ENCODE measurements at regions of chr14 and their contacts with region 1.

Region 1: DNA sequence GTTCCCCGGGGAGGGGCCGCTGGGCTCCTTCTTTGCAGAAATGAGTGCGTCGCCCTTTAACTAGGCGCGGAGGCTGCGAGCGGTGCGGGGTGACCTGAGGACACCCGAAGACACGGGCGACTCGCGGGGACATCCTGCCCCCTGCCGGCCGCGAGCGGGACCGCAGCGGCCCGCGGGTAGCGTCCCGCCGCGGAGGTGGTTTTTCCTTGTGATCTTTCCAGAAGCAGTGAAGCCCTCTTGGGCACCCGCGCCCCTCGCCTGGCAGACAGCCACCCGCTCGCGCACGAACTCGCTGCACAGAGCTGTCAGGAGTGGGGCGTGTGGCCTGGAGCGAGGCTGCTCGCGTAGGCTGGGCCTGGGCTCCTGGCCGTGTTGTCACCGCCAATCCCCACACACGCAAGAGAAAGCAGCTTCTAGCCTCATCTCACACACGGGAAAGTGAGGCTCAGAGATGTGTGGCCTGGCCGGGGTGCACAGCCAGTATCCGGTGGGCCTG is 67.2 kb downstream of the DIO3 start:
- DNase-seq: peak; percentile 67 to 73 (median 69)
- H3K4me3 ChIP-seq: no peak overlapping the region
- H3K4me3 Mint-ChIP-seq: peak overlapping the region in 1 of 8 donors; percentile 32
- H3K27ac ChIP-seq: no peak overlapping the region
- H3K27ac Mint-ChIP-seq: no peak overlapping the region
- H3K4me1 ChIP-seq: peaks cover 8% of the 10 kb centered on the region
- H3K4me1 Mint-ChIP-seq: peaks cover 0 to 5% (median 0%) of the 10 kb centered on the region in 4 donors
- H3K27me3 ChIP-seq: no peaks in the 10 kb centered on the region
- H3K27me3 Mint-ChIP-seq: peaks cover 0 to 6% of the 10 kb centered on the region in 2 donors

Region 2: DNA sequence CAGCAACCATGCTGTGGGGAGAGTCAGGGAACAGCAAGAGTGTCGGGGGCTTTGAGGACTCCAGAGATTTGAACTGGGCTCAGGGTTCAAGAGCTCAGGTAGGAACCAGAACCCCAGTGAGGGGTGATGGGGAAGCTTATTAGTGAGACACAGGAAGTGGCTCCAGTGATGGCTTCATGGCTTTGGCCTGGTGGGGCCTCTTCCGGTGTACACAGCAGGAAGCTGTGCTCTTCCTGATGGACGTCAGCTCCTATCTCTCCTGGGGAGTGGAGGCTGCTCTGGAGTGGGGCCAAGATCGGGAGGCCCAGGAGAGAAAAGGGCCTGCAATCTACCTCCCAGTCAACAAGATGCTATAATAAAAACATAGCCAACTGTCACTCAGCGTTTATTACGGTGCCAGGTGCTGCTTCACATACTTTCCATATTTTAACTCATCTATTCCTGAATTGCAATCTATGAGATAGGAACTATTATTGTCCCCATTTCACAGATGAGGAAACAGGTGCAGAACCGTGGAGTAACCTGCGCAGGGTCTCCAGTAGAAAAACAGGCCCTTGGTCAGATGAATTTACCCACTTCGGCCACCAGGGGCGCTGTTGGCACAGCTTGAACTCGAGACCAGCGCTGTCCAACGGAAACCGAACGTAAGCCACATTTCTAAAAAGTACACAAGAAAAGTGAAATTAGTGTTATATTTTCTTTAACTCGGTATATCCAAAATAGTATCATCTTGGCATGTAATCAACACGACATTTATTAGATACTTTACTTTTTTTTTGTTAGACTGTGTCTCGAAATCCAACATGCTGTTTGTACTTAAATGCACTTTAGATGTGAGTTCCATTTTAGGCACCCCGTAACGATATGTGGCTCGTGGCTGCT is 965.4 kb before region 1 on chr14:
- CTCF ChIA-PET with region 1: interaction called, 3 read pairs
- POLR2A ChIA-PET with region 1: no interaction called
- intact Hi-C with region 1: loop called (anchors 1 kb)
- DNase-seq: peak in 4 of 5 donors; percentile 42 to 53 (median 48)
- H3K4me3 ChIP-seq: no peak overlapping the region
- H3K4me3 Mint-ChIP-seq: no peak overlapping the region
- H3K27ac ChIP-seq: no peak overlapping the region
- H3K27ac Mint-ChIP-seq: no peak overlapping the region
- H3K4me1 ChIP-seq: no peaks in the 10 kb centered on the region
- H3K4me1 Mint-ChIP-seq: peaks cover 0 to 3% (median 0%) of the 10 kb centered on the region in 4 donors
- H3K27me3 ChIP-seq: no peaks in the 10 kb centered on the region
- H3K27me3 Mint-ChIP-seq: peaks cover 6 to 8% of the 10 kb centered on the region in 2 donors

Region 3: GRCh38 chr14:100850841-100851585 is 777.5 kb before region 1 on chr14:
- CTCF ChIA-PET with region 1: interaction called, 12 read pairs
- POLR2A ChIA-PET with region 1: no interaction called
- intact Hi-C with region 1: no loop called
- DNase-seq: peak; percentile 59 to 71 (median 64)
- H3K4me3 ChIP-seq: no peak overlapping the region
- H3K4me3 Mint-ChIP-seq: peak overlapping the region in 1 of 8 donors; percentile 9
- H3K27ac ChIP-seq: no peak overlapping the region
- H3K27ac Mint-ChIP-seq: no peak overlapping the region
- H3K4me1 ChIP-seq: peaks cover 9% of the 10 kb centered on the region
- H3K4me1 Mint-ChIP-seq: peaks cover 0 to 3% (median 0%) of the 10 kb centered on the region in 4 donors
- H3K27me3 ChIP-seq: no peaks in the 10 kb centered on the region
- H3K27me3 Mint-ChIP-seq: no peaks in the 10 kb centered on the region